ENCODE measurements at regions of chr16 and their contacts with region 1.

Region 1: GRCh38 chr16:3525951-3526350 is 25.1 kb downstream of the CLUAP1 start:
- DNase-seq: no peak
- ATAC-seq: peak in 2 of 4 donors; percentile 43 to 74
- H3K4me3 ChIP-seq: no peak overlapping the region
- H3K27ac ChIP-seq: peak overlapping the region; percentile 16
- H3K4me1 ChIP-seq: no peaks in the 10 kb centered on the region
- H3K27me3 ChIP-seq: no peaks in the 10 kb centered on the region
- CTCF ChIP-seq: no peak

Region 2: DNA sequence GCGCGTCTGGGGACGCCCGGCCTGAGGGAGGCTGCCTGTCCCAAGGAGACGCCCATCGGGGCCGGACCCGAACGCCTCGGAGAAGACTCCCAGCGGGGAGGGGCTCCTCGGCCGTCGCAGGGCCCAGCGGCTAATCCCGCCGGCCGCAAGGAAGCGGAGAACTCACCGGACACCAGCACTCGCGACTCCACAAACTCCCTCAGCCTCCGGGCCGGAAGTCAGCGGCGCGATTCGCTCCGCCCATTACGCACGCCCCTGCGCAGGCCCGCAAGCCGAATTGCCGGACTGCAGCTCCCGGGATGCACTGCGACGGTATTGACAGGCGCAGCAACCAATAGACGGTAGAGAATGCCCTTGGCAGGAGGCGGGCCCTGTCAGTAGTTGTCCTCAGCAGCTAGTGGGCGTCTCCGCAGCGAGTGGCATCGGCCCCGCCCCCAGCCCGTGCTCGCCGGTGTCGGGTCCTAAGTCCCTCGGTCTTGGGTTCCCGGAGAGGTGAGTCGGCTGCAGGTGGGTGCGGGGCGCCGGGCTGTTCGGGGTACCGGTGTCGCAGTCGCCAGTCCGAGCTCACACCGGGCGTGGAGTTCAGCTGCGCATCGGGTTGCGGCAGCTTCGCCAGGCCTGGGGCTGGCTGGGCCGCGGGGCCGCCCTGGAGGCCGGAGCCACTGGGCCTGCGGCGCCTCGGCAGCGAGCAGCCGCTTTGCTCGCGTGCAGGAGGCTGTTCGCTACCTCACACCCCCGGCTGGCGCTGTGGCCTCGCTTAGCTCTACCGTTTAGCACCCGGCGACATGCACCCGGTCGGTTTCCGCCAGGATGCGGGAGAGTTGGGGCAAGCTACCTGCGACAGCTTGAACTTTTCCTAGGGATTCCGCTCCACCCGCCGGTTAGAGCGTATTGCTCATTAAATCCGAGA is 124.9 kb before region 1 on chr16 and contains the starts of genes ZNF174 and ZSCAN32:
- intact Hi-C with region 1: no loop called
- DNase-seq: peak; percentile 99
- ATAC-seq: peak; percentile 99 to 100 (median 100)
- H3K4me3 ChIP-seq: peak within 1 kb of the TSS; percentile 98
- H3K27ac ChIP-seq: peak within 1 kb of the TSS; percentile 90
- H3K4me1 ChIP-seq: peaks cover 12% of the 10 kb centered on the region
- H3K27me3 ChIP-seq: no peaks in the 10 kb centered on the region
- CTCF ChIP-seq: no peak
- total RNA-seq, gene ZNF174: 6.2 to 8.4 (median 7.6) TPM
- total RNA-seq, gene ZSCAN32: 4.7 to 9.5 (median 6.2) TPM

Region 3: GRCh38 chr16:3611146-3611975 is 85.4 kb after region 1 on chr16 and contains the start of gene SLX4:
- intact Hi-C with region 1: loop called in 1 of 2 experiments (anchors 5 kb)
- DNase-seq: peak; percentile 92 to 96
- ATAC-seq: peak; percentile 97 to 99 (median 98)
- H3K4me3 ChIP-seq: peak within 1 kb of the TSS; percentile 98
- H3K27ac ChIP-seq: peak within 1 kb of the TSS; percentile 88
- H3K4me1 ChIP-seq: peaks cover 12% of the 10 kb centered on the region
- H3K27me3 ChIP-seq: no peaks in the 10 kb centered on the region
- CTCF ChIP-seq: no peak
- total RNA-seq, gene SLX4: 1.9 to 3.1 (median 2.5) TPM

Measured in psoas muscle (tissue), 8 donors.